ENCODE measurements at regions of chr1 and their contacts with region 1.

Region 1: DNA sequence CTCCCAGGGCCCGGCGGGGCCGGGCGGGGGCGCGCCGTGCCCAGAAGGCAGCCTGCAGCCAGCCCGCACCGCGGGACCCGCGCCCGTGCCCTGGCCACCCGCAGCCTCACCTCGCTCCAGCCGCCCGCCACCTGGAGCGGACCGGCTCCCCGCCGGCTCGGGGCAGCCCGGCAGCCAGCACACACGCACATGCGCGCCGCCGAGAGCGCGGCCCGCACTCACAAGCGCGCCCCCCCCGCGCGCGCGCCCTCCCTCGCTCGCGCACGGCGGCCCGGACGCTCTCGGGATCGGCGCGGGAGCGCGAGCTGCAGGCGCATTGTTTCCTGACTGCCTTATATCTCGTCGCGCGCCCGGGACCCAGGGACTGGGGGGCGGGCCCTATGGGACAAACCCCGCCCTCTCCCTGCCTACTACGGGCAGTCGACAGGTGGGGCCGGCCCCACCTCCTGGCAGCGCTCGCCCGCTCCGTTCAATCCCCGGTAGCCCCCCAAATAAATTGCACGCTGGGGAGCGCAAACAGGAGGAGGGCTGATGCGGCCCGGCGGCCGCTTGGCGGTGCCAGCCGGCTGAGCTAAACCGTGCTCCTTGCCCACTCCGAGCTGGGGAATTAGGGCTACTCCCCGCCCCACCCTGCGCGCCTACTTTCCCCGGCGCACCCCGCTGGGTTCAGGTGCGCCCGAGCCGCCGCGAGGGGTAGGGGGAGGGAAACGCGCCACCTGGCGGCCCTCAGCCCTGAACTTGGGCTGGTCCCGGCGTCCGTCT is at the start of gene MYCL:
- DNase-seq: peak; percentile 25 to 80 (median 69)
- ATAC-seq: peak; percentile 81
- H3K4me3 ChIP-seq: peak within 1 kb of the TSS; percentile 61 to 66
- H3K4me3 Mint-ChIP-seq: peak within 1 kb of the TSS; percentile 77
- H3K27ac ChIP-seq: no peak within 1 kb of the TSS
- H3K27ac Mint-ChIP-seq: no peak within 1 kb of the TSS
- H3K4me1 ChIP-seq: peaks cover 4% of the 10 kb centered on the region
- H3K4me1 Mint-ChIP-seq: peaks cover 7% of the 10 kb centered on the region
- H3K27me3 ChIP-seq: peaks cover 18 to 21% of the 10 kb centered on the region in 2 experiments
- H3K27me3 Mint-ChIP-seq: peaks cover 54% of the 10 kb centered on the region
- CTCF ChIP-seq: peak; percentile 63
- total RNA-seq, gene MYCL: 0.22 TPM in 1 of 2 experiments, not detected in the other

Region 2: GRCh38 chr1:39845275-39846116 is 56.4 kb before region 1 on chr1:
- CTCF ChIA-PET with region 1: interaction called, 16 read pairs
- POLR2A ChIA-PET with region 1: no interaction called
- intact Hi-C with region 1: no loop called
- DNase-seq: peak; percentile 50 to 93 (median 77)
- ATAC-seq: peak; percentile 97
- H3K4me3 ChIP-seq: no peak overlapping the region
- H3K4me3 Mint-ChIP-seq: peak overlapping the region; percentile 40
- H3K27ac ChIP-seq: peak overlapping the region; percentile 1 to 43
- H3K27ac Mint-ChIP-seq: peak overlapping the region; percentile 94
- H3K4me1 ChIP-seq: peaks cover 53% of the 10 kb centered on the region
- H3K4me1 Mint-ChIP-seq: peaks cover 56% of the 10 kb centered on the region
- H3K27me3 ChIP-seq: no peaks in the 10 kb centered on the region
- H3K27me3 Mint-ChIP-seq: no peaks in the 10 kb centered on the region
- CTCF ChIP-seq: no peak

Region 3: DNA sequence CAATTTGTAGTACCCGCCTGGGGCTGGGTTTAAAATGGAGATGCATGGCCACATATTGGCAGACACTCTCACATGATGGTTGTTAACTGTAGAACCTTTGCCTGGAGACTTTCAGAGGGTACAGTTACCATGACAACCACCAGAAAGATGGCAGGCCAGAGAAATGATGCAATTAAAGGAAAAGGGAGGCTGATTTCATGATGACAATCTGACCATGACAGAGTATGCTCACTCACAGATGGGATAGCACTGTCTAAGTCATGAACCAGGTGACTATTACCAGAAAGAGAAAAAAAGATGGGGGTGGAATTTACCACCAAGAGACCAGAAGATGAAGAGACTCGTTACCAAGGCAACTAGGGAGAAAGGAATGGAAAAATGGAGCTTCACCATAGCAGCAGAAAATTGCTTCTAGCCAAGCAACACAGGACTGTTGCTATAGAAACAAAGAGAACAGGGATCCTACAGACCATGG is 15.1 kb before region 1 on chr1:
- CTCF ChIA-PET with region 1: interaction called, 17 read pairs
- POLR2A ChIA-PET with region 1: no interaction called
- intact Hi-C with region 1: loop called (anchors 1 kb)
- DNase-seq: no peak
- ATAC-seq: no peak
- H3K4me3 ChIP-seq: no peak overlapping the region
- H3K4me3 Mint-ChIP-seq: no peak overlapping the region
- H3K27ac ChIP-seq: no peak overlapping the region
- H3K27ac Mint-ChIP-seq: no peak overlapping the region
- H3K4me1 ChIP-seq: peaks cover 11% of the 10 kb centered on the region
- H3K4me1 Mint-ChIP-seq: peaks cover 15% of the 10 kb centered on the region
- H3K27me3 ChIP-seq: peaks cover 0 to 4% of the 10 kb centered on the region in 2 experiments
- H3K27me3 Mint-ChIP-seq: peaks cover 5% of the 10 kb centered on the region
- CTCF ChIP-seq: no peak

Region 4: DNA sequence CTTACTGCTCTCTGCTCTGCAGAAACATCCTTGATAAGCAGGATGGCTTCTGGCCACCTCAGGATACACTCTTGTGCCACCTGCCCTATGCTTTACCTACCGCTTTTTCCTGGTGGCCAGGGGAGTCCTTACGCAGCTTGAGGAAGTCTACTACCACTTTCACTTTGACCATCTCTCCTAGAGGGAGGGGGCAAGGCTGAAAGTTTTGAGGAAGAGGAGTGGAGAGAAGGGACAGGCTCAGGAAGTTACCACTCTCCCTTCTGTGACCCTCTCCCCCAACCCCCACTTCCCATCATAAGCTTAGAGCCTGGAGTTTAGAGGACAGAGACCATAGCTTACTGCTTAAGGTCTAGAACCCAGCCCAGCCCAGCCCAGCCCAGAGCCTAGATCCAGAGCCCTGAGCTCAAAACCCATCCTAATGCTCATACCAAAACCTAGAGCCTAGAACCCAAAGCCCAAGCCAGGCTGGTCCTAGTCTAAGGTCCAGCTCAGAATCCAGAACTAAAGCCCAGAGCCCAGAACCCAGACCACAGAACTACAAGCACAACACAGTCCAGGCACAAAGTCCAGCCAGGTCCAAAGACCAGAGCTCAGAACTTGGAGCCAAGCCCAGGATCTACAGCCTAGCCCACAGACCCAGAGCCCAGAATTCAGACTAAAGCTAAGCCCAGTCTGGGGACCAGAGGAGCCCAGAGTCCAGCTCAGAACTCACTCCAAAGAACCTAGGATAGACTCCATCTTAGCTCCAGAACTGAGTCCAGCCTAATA is 35.0 kb after region 1 on chr1:
- CTCF ChIA-PET with region 1: no interaction called
- POLR2A ChIA-PET with region 1: no interaction called
- intact Hi-C with region 1: no loop called
- DNase-seq: no peak
- ATAC-seq: no peak
- H3K4me3 ChIP-seq: no peak overlapping the region
- H3K4me3 Mint-ChIP-seq: no peak overlapping the region
- H3K27ac ChIP-seq: no peak overlapping the region
- H3K27ac Mint-ChIP-seq: no peak overlapping the region
- H3K4me1 ChIP-seq: no peaks in the 10 kb centered on the region
- H3K4me1 Mint-ChIP-seq: no peaks in the 10 kb centered on the region
- H3K27me3 ChIP-seq: no peaks in the 10 kb centered on the region
- H3K27me3 Mint-ChIP-seq: no peaks in the 10 kb centered on the region
- CTCF ChIP-seq: no peak

Measured in CD8-positive, alpha-beta T cell (primary cell).